Naive thymus-derived CD4-positive, alpha-beta T cell (primary cell): ENCODE measurements at regions of chr20 and their contacts with region 1.

Region 1: GRCh38 chr20:59165891-59166709 is 2.5 kb downstream of the ZNF831 start:
- DNase-seq: peak in 5 of 9 donors; percentile 43 to 65 (median 50)
- ATAC-seq: peak; percentile 72
- H3K4me3 ChIP-seq: peak overlapping the region; percentile 48
- H3K4me3 Mint-ChIP-seq: peak overlapping the region; percentile 76 to 93 (median 87)
- H3K27ac ChIP-seq: peak overlapping the region; percentile 93
- H3K27ac Mint-ChIP-seq: peak overlapping the region; percentile 95 to 99 (median 98)
- H3K4me1 ChIP-seq: peaks cover 70 to 72% of the 10 kb centered on the region in 2 donors
- H3K4me1 Mint-ChIP-seq: peaks cover 68 to 97% (median 93%) of the 10 kb centered on the region in 7 donors
- H3K27me3 ChIP-seq: no peaks in the 10 kb centered on the region
- H3K27me3 Mint-ChIP-seq: no peaks in the 10 kb centered on the region

Region 2: DNA sequence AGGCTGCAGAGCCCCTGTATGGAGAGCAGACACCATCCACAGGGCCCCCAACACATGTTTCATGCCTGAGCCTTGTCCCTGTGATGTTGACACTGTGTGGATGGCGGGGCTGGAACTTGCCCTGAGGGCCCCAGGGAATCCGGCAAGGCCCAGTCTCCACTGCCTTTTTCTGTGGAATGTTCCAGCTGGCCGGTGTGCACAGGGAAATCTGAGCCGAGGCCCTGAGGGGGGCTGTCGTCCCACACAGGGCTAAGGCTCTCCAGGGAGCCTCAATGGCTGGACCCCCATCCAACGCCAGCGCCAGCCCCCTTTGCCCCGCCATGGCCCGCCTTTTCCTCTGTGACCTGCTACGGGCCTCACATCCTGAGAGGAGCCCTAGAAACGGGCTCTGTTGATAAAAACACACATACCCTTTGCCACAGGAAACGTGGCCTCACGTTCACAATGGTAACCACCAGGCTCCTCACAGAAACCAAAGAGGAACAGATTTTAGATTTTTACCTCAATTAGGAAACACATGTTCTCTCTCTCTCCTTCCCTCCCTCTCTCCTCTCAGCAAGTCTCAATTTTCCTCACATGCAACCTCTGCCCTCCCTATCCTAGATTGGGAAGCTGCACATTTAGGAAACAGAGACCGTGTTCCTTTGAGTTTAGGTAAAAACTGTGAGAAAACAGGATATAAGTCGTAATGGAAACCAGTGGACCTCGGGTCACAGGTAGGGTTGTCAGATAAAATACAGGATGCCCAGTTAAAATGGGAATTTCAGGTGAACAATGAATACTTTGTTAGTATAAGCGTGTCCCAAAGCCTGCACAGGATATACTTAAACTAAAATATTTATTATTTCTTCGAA is 16.2 kb before region 1 on chr20:
- CTCF ChIA-PET with region 1: interaction called, 10 read pairs
- POLR2A ChIA-PET with region 1: interaction called, 69 read pairs
- intact Hi-C with region 1: loop called (anchors 1 kb)
- DNase-seq: peak; percentile 51 to 93 (median 88)
- ATAC-seq: peak; percentile 91
- H3K4me3 ChIP-seq: peak overlapping the region; percentile 33
- H3K4me3 Mint-ChIP-seq: peak overlapping the region; percentile 56 to 91 (median 82)
- H3K27ac ChIP-seq: peak overlapping the region; percentile 98
- H3K27ac Mint-ChIP-seq: peak overlapping the region; percentile 96 to 100 (median 99)
- H3K4me1 ChIP-seq: peaks cover 83% of the 10 kb centered on the region in 2 donors
- H3K4me1 Mint-ChIP-seq: peaks cover 53 to 98% (median 94%) of the 10 kb centered on the region in 7 donors
- H3K27me3 ChIP-seq: no peaks in the 10 kb centered on the region
- H3K27me3 Mint-ChIP-seq: no peaks in the 10 kb centered on the region

Region 3: DNA sequence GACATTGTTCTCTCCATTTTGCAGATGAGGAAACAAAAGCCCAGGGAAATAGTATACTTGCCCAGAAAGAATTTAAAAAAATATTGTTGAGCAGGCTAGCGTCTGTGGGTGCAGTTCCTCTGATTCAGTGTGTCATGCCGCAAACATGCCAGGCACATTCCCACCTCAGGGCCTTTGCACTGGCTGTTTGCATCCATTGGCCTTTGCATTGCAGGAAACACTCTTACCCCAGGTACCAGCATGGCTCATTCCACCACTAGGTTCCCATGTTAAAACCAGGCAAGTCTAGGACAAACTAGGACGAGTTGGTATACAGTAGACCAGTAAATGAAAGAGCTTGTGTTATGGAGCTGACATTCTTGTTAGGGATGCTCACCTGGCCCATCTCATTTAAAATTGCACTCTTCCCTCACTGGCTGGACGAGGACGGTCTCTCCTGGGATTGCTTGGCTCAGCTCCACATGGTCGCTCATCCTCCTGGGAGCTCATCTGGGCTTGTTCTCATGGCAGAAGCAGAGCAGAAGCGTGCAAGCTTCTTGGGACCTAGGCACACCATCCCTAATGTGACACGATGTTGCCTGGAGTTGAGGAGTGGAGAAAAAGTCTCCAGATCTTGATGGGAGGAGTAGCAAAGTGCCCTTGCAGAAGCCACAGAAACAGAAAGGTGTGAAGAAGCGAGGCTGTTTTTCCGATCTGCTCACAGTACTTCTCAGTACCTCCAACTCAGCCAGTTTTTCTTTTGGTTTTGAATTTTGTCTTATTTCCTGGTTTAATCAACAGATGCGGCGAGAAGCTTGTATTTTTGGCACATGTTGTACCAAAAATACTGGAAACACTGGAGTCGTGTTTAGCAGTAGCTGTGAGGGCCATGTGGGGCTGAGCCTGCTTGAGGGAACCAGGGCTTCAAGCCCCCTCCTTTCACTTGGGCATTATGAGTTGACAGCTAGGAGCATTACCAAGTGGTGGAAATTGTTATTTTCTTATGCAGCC is 11.5 kb after region 1 on chr20:
- CTCF ChIA-PET with region 1: interaction called, 3 read pairs
- POLR2A ChIA-PET with region 1: interaction called, 16 read pairs
- intact Hi-C with region 1: loop called (anchors 1 kb)
- DNase-seq: peak in 4 of 9 donors; percentile 28 to 46 (median 32)
- ATAC-seq: peak; percentile 75
- H3K4me3 ChIP-seq: peak overlapping the region; percentile 32
- H3K4me3 Mint-ChIP-seq: peak overlapping the region; percentile 40 to 83 (median 74)
- H3K27ac ChIP-seq: peak overlapping the region; percentile 71
- H3K27ac Mint-ChIP-seq: peak overlapping the region; percentile 86 to 96 (median 91)
- H3K4me1 ChIP-seq: peaks cover 72 to 81% of the 10 kb centered on the region in 2 donors
- H3K4me1 Mint-ChIP-seq: peaks cover 51 to 97% (median 88%) of the 10 kb centered on the region in 7 donors
- H3K27me3 ChIP-seq: no peaks in the 10 kb centered on the region
- H3K27me3 Mint-ChIP-seq: no peaks in the 10 kb centered on the region

Region 4: GRCh38 chr20:59253779-59254319 is 87.7 kb after region 1 on chr20:
- CTCF ChIA-PET with region 1: no interaction called
- POLR2A ChIA-PET with region 1: no interaction called
- intact Hi-C with region 1: loop called (anchors 5 kb)
- DNase-seq: peak in 7 of 9 donors; percentile 10 to 41 (median 25)
- ATAC-seq: peak; percentile 63
- H3K4me3 ChIP-seq: peak overlapping the region; percentile 27
- H3K4me3 Mint-ChIP-seq: peak overlapping the region; percentile 66 to 83 (median 73)
- H3K27ac ChIP-seq: peak overlapping the region; percentile 58
- H3K27ac Mint-ChIP-seq: peak overlapping the region; percentile 83 to 97 (median 93)
- H3K4me1 ChIP-seq: peaks cover 43 to 45% of the 10 kb centered on the region in 2 donors
- H3K4me1 Mint-ChIP-seq: peaks cover 50 to 82% (median 66%) of the 10 kb centered on the region in 7 donors
- H3K27me3 ChIP-seq: no peaks in the 10 kb centered on the region
- H3K27me3 Mint-ChIP-seq: no peaks in the 10 kb centered on the region

Region 5: GRCh38 chr20:60424267-60424902 is 1258.3 kb after region 1 on chr20:
- CTCF ChIA-PET with region 1: no interaction called
- POLR2A ChIA-PET with region 1: no interaction called
- intact Hi-C with region 1: no loop called
- DNase-seq: no peak
- ATAC-seq: no peak
- H3K4me3 ChIP-seq: no peak overlapping the region
- H3K4me3 Mint-ChIP-seq: no peak overlapping the region
- H3K27ac ChIP-seq: no peak overlapping the region
- H3K27ac Mint-ChIP-seq: peak overlapping the region in 1 of 9 donors; percentile 36
- H3K4me1 ChIP-seq: no peaks in the 10 kb centered on the region
- H3K4me1 Mint-ChIP-seq: no peaks in the 10 kb centered on the region
- H3K27me3 ChIP-seq: no peaks in the 10 kb centered on the region
- H3K27me3 Mint-ChIP-seq: peaks cover 0 to 18% (median 2%) of the 10 kb centered on the region in 5 donors